ENCODE measurements at regions of chr10 and their contacts with region 1.

Region 1: GRCh38 chr10:96826438-96826837 is 5.7 kb upstream of the LCOR start:
- DNase-seq: no peak
- H3K4me3 ChIP-seq: no peak overlapping the region
- H3K27ac ChIP-seq: no peak overlapping the region
- H3K4me1 ChIP-seq: peaks cover 0 to 14% (median 7%) of the 10 kb centered on the region in 3 donors
- H3K27me3 ChIP-seq: no peaks in the 10 kb centered on the region
- CTCF ChIP-seq: no peak
- POLR2A ChIP-seq: no peak

Region 2: GRCh38 chr10:96642973-96643372 is 183.5 kb before region 1 on chr10:
- intact Hi-C with region 1: loop called (anchors 10 kb)
- DNase-seq: peak; percentile 10
- H3K4me3 ChIP-seq: no peak overlapping the region
- H3K27ac ChIP-seq: no peak overlapping the region
- H3K4me1 ChIP-seq: no peaks in the 10 kb centered on the region
- H3K27me3 ChIP-seq: no peaks in the 10 kb centered on the region
- CTCF ChIP-seq: peak; percentile 29 to 56 (median 39)
- POLR2A ChIP-seq: no peak

Region 3: GRCh38 chr10:97109547-97109946 is 283.1 kb after region 1 on chr10:
- intact Hi-C with region 1: no loop called
- DNase-seq: no peak
- H3K4me3 ChIP-seq: no peak overlapping the region
- H3K27ac ChIP-seq: no peak overlapping the region
- H3K4me1 ChIP-seq: no peaks in the 10 kb centered on the region
- H3K27me3 ChIP-seq: peaks cover 0 to 61% (median 0%) of the 10 kb centered on the region in 4 donors
- CTCF ChIP-seq: no peak
- POLR2A ChIP-seq: no peak

Measured in esophagus squamous epithelium (tissue), 5 donors.